OCI-LY7 (cell line): ENCODE measurements at regions of chr15 and their contacts with region 1.

Region 1: GRCh38 chr15:64925335-64926310 is 13.9 kb downstream of the ANKDD1A start:
- DNase-seq: no peak
- H3K4me3 ChIP-seq: no peak overlapping the region
- H3K27ac ChIP-seq: no peak overlapping the region
- H3K4me1 ChIP-seq: no peaks in the 10 kb centered on the region
- CTCF ChIP-seq: no peak

Region 2: DNA sequence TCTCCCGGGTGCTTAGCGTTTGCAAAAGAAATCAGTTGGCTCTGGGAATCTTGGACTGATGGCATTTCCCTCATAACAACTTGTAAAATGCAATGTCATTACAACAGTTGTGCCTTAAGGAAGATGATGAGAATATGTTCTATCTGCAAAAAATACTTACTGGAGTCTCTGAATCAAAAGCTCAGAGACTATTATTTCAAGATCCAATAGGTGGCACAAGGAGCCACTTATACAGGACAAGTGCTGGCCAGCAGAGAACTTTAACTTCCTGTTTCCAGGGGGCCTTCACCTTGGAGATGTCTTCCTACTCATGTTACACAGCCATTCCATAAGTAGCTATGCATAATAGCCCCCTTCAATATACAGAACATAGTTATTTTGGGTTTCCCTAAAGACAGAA is 1759.4 kb before region 1 on chr15:
- CTCF ChIA-PET with region 1: no interaction called
- POLR2A ChIA-PET with region 1: no interaction called
- intact Hi-C with region 1: no loop called
- DNase-seq: peak; percentile 45
- H3K4me3 ChIP-seq: no peak overlapping the region
- H3K27ac ChIP-seq: no peak overlapping the region
- H3K4me1 ChIP-seq: peaks cover 10% of the 10 kb centered on the region
- CTCF ChIP-seq: peak; percentile 67

Region 3: GRCh38 chr15:64775551-64776401 is 149.8 kb before region 1 on chr15 and contains the start of gene RBPMS2:
- CTCF ChIA-PET with region 1: no interaction called
- POLR2A ChIA-PET with region 1: no interaction called
- intact Hi-C with region 1: no loop called
- DNase-seq: no peak
- H3K4me3 ChIP-seq: no peak within 1 kb of the TSS
- H3K27ac ChIP-seq: no peak within 1 kb of the TSS
- H3K4me1 ChIP-seq: no peaks in the 10 kb centered on the region
- CTCF ChIP-seq: no peak
- total RNA-seq, gene RBPMS2: not detected in 2 replicates

Region 4: GRCh38 chr15:65066635-65067316 is 141.2 kb after region 1 on chr15:
- CTCF ChIA-PET with region 1: interaction called, 11 read pairs
- POLR2A ChIA-PET with region 1: no interaction called
- intact Hi-C with region 1: no loop called
- DNase-seq: no peak
- H3K4me3 ChIP-seq: no peak overlapping the region
- H3K27ac ChIP-seq: no peak overlapping the region
- H3K4me1 ChIP-seq: no peaks in the 10 kb centered on the region
- CTCF ChIP-seq: no peak